Lower leg skin (tissue), 4 donors: ENCODE measurements at regions of chr14 and their contacts with region 1.

Region 1: DNA sequence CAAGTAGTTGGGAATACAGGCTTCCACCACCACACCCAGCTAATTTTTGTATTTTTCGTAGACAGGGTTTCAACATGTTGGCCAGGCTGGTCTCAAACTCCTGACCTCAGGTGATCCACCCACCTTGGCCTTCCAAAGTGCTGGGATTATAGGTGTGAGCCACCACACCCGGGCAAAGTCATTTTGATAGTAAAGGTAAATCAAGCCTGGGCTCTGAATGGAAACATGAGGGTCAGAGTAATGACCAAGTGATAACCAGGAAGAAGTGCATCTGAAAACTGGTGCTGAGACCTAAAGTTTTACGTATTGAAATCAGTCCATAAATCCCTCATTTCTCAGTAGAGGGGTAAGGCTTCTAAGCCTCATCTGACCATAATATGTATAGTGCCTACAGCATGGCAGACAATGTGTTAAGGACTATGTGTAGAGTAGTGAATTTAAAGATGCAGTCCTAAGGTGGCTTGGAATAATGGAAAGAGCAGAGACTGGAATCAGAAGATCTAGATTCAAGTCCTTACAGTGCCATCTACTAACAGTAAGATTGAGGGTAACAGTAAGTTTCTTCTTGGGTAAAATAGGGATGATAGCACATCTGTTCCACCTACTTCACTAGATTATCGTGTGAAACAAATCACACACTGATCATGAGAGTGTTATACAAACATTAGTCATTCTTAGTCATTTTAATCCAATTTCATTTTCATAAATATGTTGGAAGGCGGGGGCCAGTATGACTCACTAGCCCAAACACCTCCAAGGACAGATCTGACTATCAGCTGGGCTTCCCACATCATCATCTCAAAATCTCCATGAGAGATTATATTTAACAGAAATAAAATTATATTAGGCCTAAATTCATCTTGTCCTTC is 11.2 kb downstream of the MAP4K5 start:
- DNase-seq: peak in 1 of 2 donors; percentile 58
- H3K4me3 ChIP-seq: no peak overlapping the region
- CTCF ChIP-seq: no peak
- POLR2A ChIP-seq: no peak

Region 2: DNA sequence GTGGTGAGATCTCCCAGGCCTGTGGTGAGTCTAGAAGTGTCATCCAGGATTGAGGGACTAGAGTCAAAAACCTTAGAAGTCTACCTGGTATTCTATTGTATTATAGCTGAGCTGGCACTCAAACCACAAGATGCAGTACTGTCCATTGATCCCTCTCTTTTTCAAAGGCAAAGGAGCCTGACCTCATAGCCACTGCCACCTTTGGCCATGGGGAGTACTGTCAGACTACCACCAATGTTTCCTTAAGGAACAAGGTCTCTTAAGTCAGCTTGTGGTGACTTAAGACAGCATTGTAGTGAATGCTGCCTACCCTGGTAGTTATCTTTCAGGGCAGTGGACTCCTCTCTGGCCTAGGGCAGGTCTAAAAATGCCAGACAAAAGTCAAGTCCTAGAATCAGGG is 1967.7 kb before region 1 on chr14:
- intact Hi-C with region 1: no loop called
- DNase-seq: no peak
- H3K4me3 ChIP-seq: no peak overlapping the region
- CTCF ChIP-seq: no peak
- POLR2A ChIP-seq: no peak

Region 3: GRCh38 chr14:50342221-50343078 is 178.7 kb before region 1 on chr14:
- intact Hi-C with region 1: loop called (anchors 10 kb)
- DNase-seq: peak; percentile 78 to 89
- H3K4me3 ChIP-seq: no peak overlapping the region
- CTCF ChIP-seq: no peak
- POLR2A ChIP-seq: no peak